IMR-90 (cell line): ENCODE measurements at regions of chr19 and their contacts with region 1.

Region 1: DNA sequence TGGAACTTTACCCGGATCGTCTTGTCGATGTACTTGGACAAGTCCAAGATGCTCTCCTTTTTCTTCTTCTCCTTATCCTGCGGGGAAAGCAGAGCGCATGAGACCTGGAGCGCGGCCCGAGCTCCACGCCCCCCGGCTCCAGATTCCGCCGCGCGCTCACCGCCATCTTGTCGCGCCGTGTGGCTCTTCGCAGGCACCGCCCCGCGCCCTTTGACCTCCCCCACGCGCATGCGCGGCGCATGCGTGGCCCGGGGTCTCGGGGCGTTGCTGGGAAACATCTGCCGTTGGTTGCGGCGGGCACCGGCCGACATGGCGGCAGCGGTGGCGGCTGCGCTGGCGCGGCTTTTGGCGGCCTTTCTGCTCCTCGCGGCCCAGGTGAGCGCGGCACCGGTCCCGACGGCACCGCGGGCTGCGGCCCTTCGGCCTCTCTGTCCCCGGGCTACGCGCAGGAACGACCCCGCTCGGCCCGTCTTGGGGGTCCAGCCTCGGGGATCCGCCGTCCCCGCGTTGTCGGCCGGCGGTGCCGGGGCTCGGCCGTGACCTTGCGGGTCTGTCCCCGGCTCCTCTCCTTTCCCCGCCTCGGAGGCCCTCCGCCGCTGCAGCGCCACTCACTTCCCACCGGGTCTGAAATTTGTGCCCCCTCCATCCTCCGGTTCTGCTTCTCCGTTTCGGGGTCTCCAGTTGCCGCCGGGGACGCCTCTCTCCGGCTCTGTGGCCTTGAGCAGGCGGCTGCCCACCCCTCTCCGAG is at the starts of genes LSM7 and SPPL2B:
- DNase-seq: peak; percentile 83
- ATAC-seq: peak; percentile 86
- H3K4me3 ChIP-seq: peak within 1 kb of the TSS; percentile 94
- H3K27ac ChIP-seq: peak within 1 kb of the TSS; percentile 92
- H3K4me1 ChIP-seq: peaks cover 4% of the 10 kb centered on the region
- H3K27me3 ChIP-seq: no peaks in the 10 kb centered on the region
- CTCF ChIP-seq: no peak
- POLR2A ChIP-seq: peak; percentile 69; the same call in 1 of the 2 replicates
- RAD21 ChIP-seq: no peak
- total RNA-seq, gene LSM7: 145 and 200 TPM in 2 replicates
- total RNA-seq, gene SPPL2B: 3.4 and 4.2 TPM in 2 replicates

Region 2: DNA sequence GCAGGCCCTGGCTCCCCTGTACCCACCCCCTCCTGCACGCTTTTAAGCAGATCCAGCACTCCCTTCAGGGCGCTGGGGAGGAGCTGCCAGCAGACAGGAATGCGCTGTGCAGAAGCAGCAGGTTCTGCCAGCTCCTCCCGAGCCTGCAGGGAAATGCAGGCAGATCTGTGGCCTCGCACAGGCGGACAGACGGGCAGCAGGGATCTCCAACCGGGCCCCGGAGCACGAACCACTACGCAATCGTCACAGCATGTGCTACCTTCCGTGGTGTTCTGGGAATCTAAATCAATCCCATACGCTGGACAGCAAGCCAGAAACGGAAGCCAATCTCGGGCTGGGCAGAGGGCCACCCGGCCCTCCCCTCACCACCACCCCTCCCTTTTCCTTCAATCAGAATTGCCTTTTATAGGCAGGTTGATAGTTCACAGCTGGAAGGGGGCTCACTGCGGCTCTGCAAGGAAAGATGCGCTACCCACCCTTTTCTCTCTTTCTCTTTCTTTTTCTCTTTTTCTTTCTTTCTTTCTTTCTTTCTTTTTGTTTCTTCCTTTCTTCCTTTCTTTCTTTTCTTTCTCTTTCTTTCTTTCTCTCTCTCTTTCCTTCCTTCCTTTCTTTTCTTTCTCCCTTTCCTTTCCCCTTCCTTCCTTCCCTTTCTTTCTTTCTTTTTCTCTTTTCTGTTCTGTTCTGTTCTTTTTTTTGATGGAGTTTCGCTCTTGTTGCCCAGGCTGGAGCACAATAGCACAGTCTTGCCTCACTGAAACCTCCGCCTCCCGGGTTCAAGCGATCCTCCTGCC is 274.0 kb after region 1 on chr19:
- CTCF ChIA-PET with region 1: no interaction called
- POLR2A ChIA-PET with region 1: no interaction called
- dilution Hi-C with region 1: no loop called
- in situ Hi-C with region 1: no loop called
- intact Hi-C with region 1: no loop called
- DNase-seq: peak; percentile 81
- ATAC-seq: peak; percentile 74
- H3K4me3 ChIP-seq: peak overlapping the region; percentile 6; the same call in 1 of the 2 replicates
- H3K27ac ChIP-seq: 0 out of 2 replicates have a peak overlapping the region, but pooled peaks have one; percentile 38
- H3K4me1 ChIP-seq: no peaks in the 10 kb centered on the region; the same call in 1 of the 2 replicates
- H3K27me3 ChIP-seq: peaks cover under 1% of the 10 kb centered on the region; the same call in 1 of the 2 replicates
- CTCF ChIP-seq: no peak
- POLR2A ChIP-seq: no peak
- RAD21 ChIP-seq: no peak

Region 3: GRCh38 chr19:2636897-2637683 is 308.5 kb after region 1 on chr19:
- CTCF ChIA-PET with region 1: no interaction called
- POLR2A ChIA-PET with region 1: no interaction called
- dilution Hi-C with region 1: no loop called
- in situ Hi-C with region 1: no loop called
- intact Hi-C with region 1: loop called (anchors 2 kb)
- DNase-seq: peak; percentile 31
- ATAC-seq: peak; percentile 91
- H3K4me3 ChIP-seq: no peak overlapping the region
- H3K27ac ChIP-seq: no peak overlapping the region
- H3K4me1 ChIP-seq: peaks cover 5% of the 10 kb centered on the region; the same call in 1 of the 2 replicates
- H3K27me3 ChIP-seq: peaks cover 16% of the 10 kb centered on the region
- CTCF ChIP-seq: peak; percentile 78
- POLR2A ChIP-seq: no peak
- RAD21 ChIP-seq: peak; percentile 76